Activated CD4-positive, alpha-beta T cell treated with anti-CD3 and anti-CD28 coated beads for 36 hours (primary cell): ENCODE measurements at regions of chr7 and their contacts with region 1.

Region 1: GRCh38 chr7:83947260-83947659 is 247.3 kb downstream of the SEMA3A start:
- DNase-seq: peak; percentile 16
- ATAC-seq: no peak
- H3K4me3 Mint-ChIP-seq: no peak overlapping the region
- H3K27ac Mint-ChIP-seq: no peak overlapping the region
- H3K4me1 Mint-ChIP-seq: no peaks in the 10 kb centered on the region
- H3K27me3 Mint-ChIP-seq: peaks cover 2% of the 10 kb centered on the region

Region 2: DNA sequence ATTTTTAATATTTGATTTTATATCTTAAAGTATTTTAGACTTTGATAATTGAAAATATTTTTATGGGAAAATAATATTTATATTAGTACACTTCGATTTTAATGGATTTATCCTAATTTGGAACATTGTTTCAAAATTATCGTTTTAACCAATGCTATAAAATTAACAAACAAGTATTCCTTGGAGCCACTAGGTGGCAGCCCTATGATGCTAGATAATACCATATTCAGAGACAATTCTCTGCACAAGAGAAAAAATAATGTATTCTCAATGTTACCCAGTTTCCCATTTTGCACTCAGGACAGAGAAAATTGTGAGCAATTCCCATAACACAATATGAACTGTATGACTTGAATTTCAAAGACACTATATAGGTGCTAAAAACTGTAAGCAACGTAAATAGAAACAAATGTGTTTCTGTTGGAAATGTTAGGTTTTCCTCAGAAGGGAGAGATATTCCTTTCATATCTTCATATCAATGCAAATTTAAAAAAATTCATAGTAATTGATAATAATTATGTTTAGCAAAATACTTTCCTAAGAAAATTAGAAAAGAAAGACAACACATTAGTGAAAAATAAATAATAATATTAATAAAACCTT is 536.2 kb before region 1 on chr7:
- CTCF ChIA-PET with region 1: no interaction called
- POLR2A ChIA-PET with region 1: no interaction called
- intact Hi-C with region 1: loop called in 1 of 2 experiments (anchors 5 kb)
- DNase-seq: peak; percentile 14
- ATAC-seq: no peak
- H3K4me3 Mint-ChIP-seq: no peak overlapping the region
- H3K27ac Mint-ChIP-seq: no peak overlapping the region
- H3K4me1 Mint-ChIP-seq: no peaks in the 10 kb centered on the region
- H3K27me3 Mint-ChIP-seq: no peaks in the 10 kb centered on the region

Region 3: GRCh38 chr7:83738291-83738835 is 208.9 kb before region 1 on chr7:
- CTCF ChIA-PET with region 1: no interaction called
- POLR2A ChIA-PET with region 1: no interaction called
- intact Hi-C with region 1: no loop called
- DNase-seq: no peak
- ATAC-seq: no peak
- H3K4me3 Mint-ChIP-seq: no peak overlapping the region
- H3K27ac Mint-ChIP-seq: no peak overlapping the region
- H3K4me1 Mint-ChIP-seq: no peaks in the 10 kb centered on the region
- H3K27me3 Mint-ChIP-seq: no peaks in the 10 kb centered on the region

Region 4: DNA sequence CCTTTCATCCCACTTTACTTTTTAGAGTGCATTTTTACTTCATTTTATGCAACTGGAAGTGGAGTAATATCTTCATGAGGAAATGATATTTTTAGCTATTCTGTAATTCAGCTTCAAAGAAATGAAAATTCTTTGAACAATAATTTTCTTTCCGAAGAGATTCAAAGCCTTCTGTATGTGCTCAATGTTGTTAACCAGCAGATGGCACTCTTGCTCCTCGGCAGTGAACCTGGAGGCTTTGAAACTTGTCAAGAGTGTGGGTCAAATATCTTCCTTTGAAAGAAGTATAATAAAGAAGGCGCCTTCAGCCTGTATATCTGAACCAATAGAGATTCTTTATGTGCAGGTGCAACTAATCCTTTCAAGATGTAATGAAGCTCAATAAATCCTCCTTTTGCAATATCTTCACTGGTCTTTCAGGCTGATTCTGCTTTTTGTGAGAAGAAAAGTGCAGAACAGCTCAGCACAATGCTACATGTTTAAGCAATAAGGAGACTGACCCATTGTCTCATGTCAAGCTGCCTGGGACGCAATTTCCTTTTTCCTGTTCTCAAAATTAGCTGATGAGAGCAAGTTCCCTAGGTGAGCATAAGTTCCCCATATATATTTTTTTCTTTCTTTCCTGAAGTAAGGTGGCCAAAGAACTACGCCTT is 11.1 kb before region 1 on chr7:
- CTCF ChIA-PET with region 1: interaction called, 21 read pairs
- POLR2A ChIA-PET with region 1: no interaction called
- intact Hi-C with region 1: no loop called
- DNase-seq: peak; percentile 68
- ATAC-seq: peak; percentile 30
- H3K4me3 Mint-ChIP-seq: no peak overlapping the region
- H3K27ac Mint-ChIP-seq: no peak overlapping the region
- H3K4me1 Mint-ChIP-seq: peaks cover 2% of the 10 kb centered on the region
- H3K27me3 Mint-ChIP-seq: no peaks in the 10 kb centered on the region

Region 5: GRCh38 chr7:84100866-84101265 is 153.6 kb after region 1 on chr7:
- CTCF ChIA-PET with region 1: no interaction called
- POLR2A ChIA-PET with region 1: no interaction called
- intact Hi-C with region 1: no loop called
- DNase-seq: no peak
- ATAC-seq: no peak
- H3K4me3 Mint-ChIP-seq: no peak overlapping the region
- H3K27ac Mint-ChIP-seq: no peak overlapping the region
- H3K4me1 Mint-ChIP-seq: no peaks in the 10 kb centered on the region
- H3K27me3 Mint-ChIP-seq: no peaks in the 10 kb centered on the region